ENCODE measurements at regions of chr7 and their contacts with region 1.

Region 1: DNA sequence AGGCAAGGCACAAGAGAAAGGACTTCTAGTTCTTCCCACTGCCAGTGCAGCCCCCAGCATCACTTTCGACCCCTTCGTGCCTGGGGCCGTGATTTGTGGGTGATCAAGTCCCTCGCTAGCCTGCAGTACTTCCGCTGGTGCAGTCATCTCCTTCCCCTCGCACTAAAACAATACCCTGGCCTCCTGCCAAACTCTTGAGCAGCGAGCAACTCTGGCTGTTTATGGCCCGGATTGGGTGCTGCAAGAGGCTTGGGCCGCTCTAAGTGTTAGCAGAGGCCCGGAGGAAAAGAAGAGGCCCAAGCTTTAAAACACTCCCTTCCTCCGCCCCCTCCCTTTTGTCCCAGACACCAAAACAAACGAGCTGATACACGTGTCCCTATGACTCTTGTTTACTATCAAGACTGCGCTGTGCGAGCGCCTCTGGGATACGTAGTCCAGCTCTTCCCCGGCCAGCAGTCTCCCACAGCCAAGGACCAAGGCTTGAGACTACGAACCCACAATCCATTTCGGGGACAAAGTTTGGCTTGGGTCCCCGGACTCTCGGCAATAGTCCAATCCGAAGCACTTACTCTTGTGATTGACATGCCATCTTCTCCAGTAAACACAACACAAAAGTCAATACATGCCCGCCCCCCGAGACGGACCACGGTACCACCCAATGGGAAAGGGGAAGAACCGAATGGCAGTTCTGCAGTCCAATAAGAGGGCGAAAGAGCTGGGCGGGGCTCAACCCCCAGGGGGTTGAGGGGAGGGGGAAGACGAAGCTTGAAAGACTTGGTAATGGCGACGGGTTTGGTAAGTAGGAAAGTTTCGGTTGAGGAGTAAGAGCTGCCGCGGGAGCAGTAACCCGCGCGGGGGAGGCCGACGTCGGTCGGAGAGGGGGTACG is at the start of gene HBP1:
- DNase-seq: peak; percentile 100
- H3K4me3 ChIP-seq: peak within 1 kb of the TSS; percentile 81 to 97 (median 93)
- H3K27ac ChIP-seq: peak within 1 kb of the TSS; percentile 92
- H3K4me1 ChIP-seq: peaks cover 40% of the 10 kb centered on the region
- H3K27me3 ChIP-seq: no peaks in the 10 kb centered on the region
- CTCF ChIP-seq: no peak
- POLR2A ChIP-seq: peak; percentile 53
- total RNA-seq, gene HBP1: 50.1 and 63.4 TPM in 2 replicates

Region 2: GRCh38 chr7:106755641-106756040 is 412.8 kb before region 1 on chr7:
- CTCF ChIA-PET with region 1: no interaction called
- POLR2A ChIA-PET with region 1: interaction called, 10 read pairs
- dilution Hi-C with region 1: no loop called
- intact Hi-C with region 1: no loop called
- DNase-seq: no peak
- H3K4me3 ChIP-seq: no peak overlapping the region
- H3K27ac ChIP-seq: no peak overlapping the region
- H3K4me1 ChIP-seq: no peaks in the 10 kb centered on the region
- H3K27me3 ChIP-seq: no peaks in the 10 kb centered on the region
- CTCF ChIP-seq: no peak
- POLR2A ChIP-seq: no peak

Region 3: GRCh38 chr7:107044347-107045194 is 123.9 kb before region 1 on chr7 and contains the start of gene PRKAR2B:
- CTCF ChIA-PET with region 1: no interaction called
- POLR2A ChIA-PET with region 1: interaction called, 3 read pairs
- dilution Hi-C with region 1: no loop called
- intact Hi-C with region 1: loop called (anchors 1 kb)
- DNase-seq: peak; percentile 83
- H3K4me3 ChIP-seq: peak within 1 kb of the TSS; percentile 95 to 97 (median 95)
- H3K27ac ChIP-seq: peak within 1 kb of the TSS; percentile 22
- H3K4me1 ChIP-seq: peaks cover 44% of the 10 kb centered on the region
- H3K27me3 ChIP-seq: no peaks in the 10 kb centered on the region
- CTCF ChIP-seq: peak in 1 of 2 donors; percentile 18
- POLR2A ChIP-seq: peak; percentile 58
- total RNA-seq, gene PRKAR2B: 37.6 and 39.8 TPM in 2 replicates

Region 4: DNA sequence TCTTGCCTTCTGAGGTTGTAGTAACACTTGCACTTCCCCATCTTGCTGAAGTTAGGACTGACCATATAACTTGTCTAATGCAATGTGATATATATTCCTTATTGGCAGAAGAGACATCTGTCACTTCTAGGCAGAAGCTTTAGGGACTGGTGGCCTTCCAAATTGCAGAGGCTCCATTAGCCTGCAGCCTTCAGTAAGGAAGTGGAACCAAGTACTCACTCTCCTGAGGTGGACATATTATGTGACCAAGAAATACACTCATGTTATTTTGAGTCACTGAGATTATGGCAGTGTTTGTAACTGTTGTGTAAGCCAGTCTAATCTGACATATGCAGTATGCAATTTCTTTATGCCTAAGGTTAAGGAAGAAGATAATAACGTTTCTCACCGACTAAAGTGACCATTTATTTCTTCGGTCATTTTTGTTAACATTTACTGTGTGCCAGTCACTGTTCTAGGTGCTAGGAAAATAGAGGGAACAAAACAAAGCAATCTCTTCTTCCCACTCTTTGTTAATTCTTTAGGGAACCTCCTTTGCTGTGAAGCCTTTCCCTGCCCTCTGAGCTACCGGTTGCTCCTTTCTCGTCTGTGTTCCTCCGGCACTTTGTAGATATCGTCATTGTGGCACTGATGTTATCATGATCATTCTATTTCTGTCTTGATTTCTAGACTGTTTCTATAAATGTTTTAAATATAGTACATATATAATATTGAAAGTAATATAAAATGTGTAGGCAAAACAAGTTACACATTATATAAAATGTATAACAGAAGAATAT is 52.5 kb before region 1 on chr7:
- CTCF ChIA-PET with region 1: no interaction called
- POLR2A ChIA-PET with region 1: interaction called, 13 read pairs
- dilution Hi-C with region 1: no loop called
- intact Hi-C with region 1: no loop called
- DNase-seq: no peak
- H3K4me3 ChIP-seq: no peak overlapping the region
- H3K27ac ChIP-seq: no peak overlapping the region
- H3K4me1 ChIP-seq: peaks cover 9% of the 10 kb centered on the region
- H3K27me3 ChIP-seq: no peaks in the 10 kb centered on the region
- CTCF ChIP-seq: no peak
- POLR2A ChIP-seq: no peak

Region 5: DNA sequence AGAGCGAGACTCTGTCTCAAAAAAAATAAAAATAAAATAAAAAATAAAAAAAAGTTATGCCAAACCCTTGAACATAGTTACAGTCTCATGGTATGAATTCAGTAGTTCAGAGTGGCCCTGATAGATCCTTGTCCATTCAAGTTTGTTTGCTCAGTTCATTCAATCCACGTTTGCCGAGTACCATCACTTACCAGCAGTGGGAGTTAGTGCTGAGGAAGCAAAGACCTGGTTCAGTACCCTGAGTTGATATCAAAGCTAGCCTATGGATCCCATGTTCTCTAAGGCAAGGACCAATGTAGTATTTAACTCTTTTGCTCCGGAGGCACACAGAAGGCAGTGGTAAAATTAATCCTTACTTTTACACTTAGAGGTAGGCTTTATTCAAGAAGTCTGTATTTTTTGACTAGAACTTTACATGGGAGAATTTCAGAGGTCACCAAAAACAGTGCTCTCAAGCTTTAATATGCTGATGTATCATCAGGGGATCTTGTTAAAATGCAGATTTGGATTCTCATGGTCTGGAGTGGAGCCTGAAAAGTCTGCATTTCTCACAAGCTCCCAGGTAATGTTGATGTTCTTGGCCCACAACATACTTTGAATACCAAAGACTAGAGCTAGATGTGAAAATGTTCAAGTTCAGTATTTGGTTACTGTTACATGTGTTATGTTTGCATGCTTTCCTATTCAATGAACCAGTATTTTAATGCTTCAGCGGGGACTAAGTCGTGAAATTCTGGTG is 37.8 kb before region 1 on chr7:
- CTCF ChIA-PET with region 1: no interaction called
- POLR2A ChIA-PET with region 1: no interaction called
- dilution Hi-C with region 1: no loop called
- intact Hi-C with region 1: no loop called
- DNase-seq: no peak
- H3K4me3 ChIP-seq: no peak overlapping the region
- H3K27ac ChIP-seq: no peak overlapping the region
- H3K4me1 ChIP-seq: no peaks in the 10 kb centered on the region
- H3K27me3 ChIP-seq: no peaks in the 10 kb centered on the region
- CTCF ChIP-seq: peak in 1 of 2 donors; percentile 10
- POLR2A ChIP-seq: no peak

Region 6: DNA sequence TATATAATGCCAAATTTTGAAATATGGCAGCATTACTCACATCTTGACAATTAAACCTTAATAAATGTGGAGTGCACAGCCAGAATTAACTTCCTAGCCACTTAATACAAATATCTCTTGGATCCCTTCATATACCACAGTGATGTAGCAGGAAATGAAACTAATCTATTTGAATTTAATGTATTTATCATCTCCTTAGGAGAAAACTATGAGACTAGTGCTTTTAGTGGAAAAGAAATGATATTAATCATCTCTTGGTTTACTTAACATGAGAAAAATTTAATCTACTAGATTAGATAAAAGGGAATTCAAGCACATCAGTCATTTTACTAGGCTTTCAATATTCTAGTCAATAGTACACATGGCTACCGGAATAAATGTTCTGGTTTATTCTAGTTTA is 245.7 kb after region 1 on chr7:
- CTCF ChIA-PET with region 1: no interaction called
- POLR2A ChIA-PET with region 1: no interaction called
- dilution Hi-C with region 1: no loop called
- intact Hi-C with region 1: no loop called
- DNase-seq: no peak
- H3K4me3 ChIP-seq: no peak overlapping the region
- H3K27ac ChIP-seq: no peak overlapping the region
- H3K4me1 ChIP-seq: no peaks in the 10 kb centered on the region
- H3K27me3 ChIP-seq: no peaks in the 10 kb centered on the region
- CTCF ChIP-seq: no peak
- POLR2A ChIP-seq: no peak

Region 7: DNA sequence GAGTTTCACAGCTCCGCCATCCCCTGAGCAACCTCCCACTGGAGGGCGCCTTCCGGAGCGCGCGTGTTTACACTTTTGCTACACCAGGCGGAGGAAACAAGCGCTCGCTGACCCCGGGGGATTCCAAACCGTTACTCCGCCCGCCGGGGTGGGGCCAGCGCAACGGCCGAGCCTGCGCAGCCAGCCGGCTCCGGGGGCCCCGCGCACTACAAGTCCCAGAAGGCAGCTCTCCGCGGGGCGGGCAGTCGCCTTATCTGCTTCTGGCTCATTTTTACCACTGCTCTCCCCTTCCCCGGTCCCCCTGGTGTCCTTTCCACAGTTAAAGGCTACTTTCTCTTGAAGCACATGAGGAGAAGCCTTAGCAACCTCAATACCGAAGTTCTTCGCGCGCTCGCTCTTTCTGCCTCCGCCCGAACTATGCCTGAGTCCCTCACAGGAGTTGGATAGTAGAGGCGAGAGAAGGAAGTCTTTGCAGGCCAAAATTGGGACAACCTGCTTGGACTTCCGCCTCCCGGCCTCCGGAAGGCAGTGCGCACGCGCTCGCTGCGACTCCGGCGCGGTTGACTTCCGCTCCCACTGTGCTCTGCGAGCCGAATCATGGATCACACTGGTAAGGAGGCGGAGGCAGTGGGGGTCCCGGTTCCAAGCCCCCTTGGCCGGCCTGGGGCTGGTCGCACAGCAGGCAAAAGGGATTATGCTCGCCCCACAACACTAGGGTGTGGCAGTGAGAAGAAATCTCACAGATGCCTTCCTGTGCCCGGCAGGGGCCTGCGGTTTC is 575.3 kb after region 1 on chr7 and contains the start of gene CBLL1:
- CTCF ChIA-PET with region 1: no interaction called
- POLR2A ChIA-PET with region 1: interaction called, 8 read pairs
- dilution Hi-C with region 1: no loop called
- intact Hi-C with region 1: loop called (anchors 1 kb)
- DNase-seq: peak; percentile 98
- H3K4me3 ChIP-seq: peak within 1 kb of the TSS; percentile 45 to 94 (median 79)
- H3K27ac ChIP-seq: peak within 1 kb of the TSS; percentile 96
- H3K4me1 ChIP-seq: peaks cover 38% of the 10 kb centered on the region
- H3K27me3 ChIP-seq: no peaks in the 10 kb centered on the region
- CTCF ChIP-seq: peak; percentile 65 to 76
- POLR2A ChIP-seq: peak; percentile 2
- total RNA-seq, gene CBLL1: 30.6 and 31.1 TPM in 2 replicates

Measured in endothelial cell of umbilical vein (primary cell).